ENCODE measurements at regions of chr6 and their contacts with region 1.

Region 1: GRCh38 chr6:40912158-40912946 is 126.7 kb downstream of the UNC5CL start:
- H3K4me3 ChIP-seq: no peak overlapping the region
- H3K27ac ChIP-seq: no peak overlapping the region
- H3K4me1 ChIP-seq: peaks cover 4% of the 10 kb centered on the region; the same call in 1 of the 2 replicates
- CTCF ChIP-seq: peak; percentile 38; the same call in 1 of the 2 replicates

Region 2: GRCh38 chr6:40923326-40923725 is 11.0 kb after region 1 on chr6:
- CTCF ChIA-PET with region 1: interaction called, 10 read pairs
- POLR2A ChIA-PET with region 1: no interaction called
- H3K4me3 ChIP-seq: no peak overlapping the region
- H3K27ac ChIP-seq: no peak overlapping the region
- H3K4me1 ChIP-seq: no peaks in the 10 kb centered on the region
- CTCF ChIP-seq: no peak